Activated CD8-positive, alpha-beta T cell treated with anti-CD3 and anti-CD28 coated beads, Interleukin-2, amount 10 ng/mL, durations not matched to agents 7 days and 5 days (primary cell): ENCODE measurements at regions of chr6 and their contacts with region 1.

Region 1: GRCh38 chr6:26322645-26323482 is 42.1 kb upstream of the BTN3A2 start:
- DNase-seq: peak; percentile 84
- ATAC-seq: peak; percentile 72
- H3K4me3 Mint-ChIP-seq: peak overlapping the region; percentile 86
- H3K27ac Mint-ChIP-seq: peak overlapping the region; percentile 86
- H3K4me1 Mint-ChIP-seq: peaks cover 36% of the 10 kb centered on the region
- H3K27me3 Mint-ChIP-seq: peaks cover 16% of the 10 kb centered on the region

Region 2: GRCh38 chr6:25788305-25788922 is 534.5 kb before region 1 on chr6:
- CTCF ChIA-PET with region 1: no interaction called
- POLR2A ChIA-PET with region 1: no interaction called
- DNase-seq: peak; percentile 54
- ATAC-seq: peak; percentile 68
- H3K4me3 Mint-ChIP-seq: no peak overlapping the region
- H3K27ac Mint-ChIP-seq: no peak overlapping the region
- H3K4me1 Mint-ChIP-seq: no peaks in the 10 kb centered on the region
- H3K27me3 Mint-ChIP-seq: peaks cover 8% of the 10 kb centered on the region

Region 3: GRCh38 chr6:26156076-26156849 is 166.6 kb before region 1 on chr6:
- CTCF ChIA-PET with region 1: no interaction called
- POLR2A ChIA-PET with region 1: no interaction called
- DNase-seq: peak; percentile 91
- ATAC-seq: peak; percentile 55
- H3K4me3 Mint-ChIP-seq: peak overlapping the region; percentile 94
- H3K27ac Mint-ChIP-seq: peak overlapping the region; percentile 99
- H3K4me1 Mint-ChIP-seq: peaks cover 37% of the 10 kb centered on the region
- H3K27me3 Mint-ChIP-seq: peaks cover 8% of the 10 kb centered on the region

Region 4: DNA sequence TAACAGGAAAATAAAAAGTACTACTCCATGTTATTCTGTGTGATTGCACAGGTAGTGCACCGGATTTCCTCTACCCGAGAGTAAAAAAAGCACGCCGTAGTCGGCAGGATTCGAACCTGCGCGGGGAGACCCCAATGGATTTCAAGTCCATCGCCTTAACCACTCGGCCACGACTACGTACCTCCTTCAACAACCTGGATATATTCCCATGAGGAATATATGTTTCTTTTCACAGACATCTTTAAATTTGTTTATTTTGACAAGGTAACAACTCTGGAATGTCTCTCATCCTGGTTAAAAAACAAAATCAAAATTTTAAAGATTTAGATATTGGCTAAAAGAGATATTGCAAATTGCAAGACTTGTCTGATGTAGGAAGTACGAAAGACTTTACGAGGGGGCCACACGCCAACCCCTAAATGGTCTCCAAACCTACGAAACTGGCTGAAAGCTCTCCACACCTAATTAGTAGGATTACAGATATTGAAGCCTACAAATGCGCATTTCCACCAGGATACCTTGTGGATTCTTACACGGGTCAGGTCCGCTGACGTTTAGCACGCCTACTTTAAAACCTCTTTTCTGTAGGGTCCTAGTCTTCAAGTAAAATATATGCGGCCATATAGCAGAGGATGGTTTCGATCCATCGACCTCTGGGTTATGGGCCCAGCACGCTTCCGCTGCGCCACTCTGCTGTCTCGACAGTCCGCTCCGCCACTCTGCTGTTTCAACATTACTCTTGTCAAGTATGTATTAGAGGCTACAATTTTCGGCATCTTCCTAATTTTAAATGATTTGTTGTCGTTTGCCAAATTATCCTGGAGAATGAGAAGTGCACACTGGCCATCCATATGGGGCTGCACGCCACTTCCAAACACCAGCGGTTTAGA is 10.1 kb before region 1 on chr6:
- CTCF ChIA-PET with region 1: interaction called, 21 read pairs
- POLR2A ChIA-PET with region 1: interaction called, 4 read pairs
- DNase-seq: peak; percentile 89
- ATAC-seq: peak; percentile 87
- H3K4me3 Mint-ChIP-seq: peak overlapping the region; percentile 84
- H3K27ac Mint-ChIP-seq: peak overlapping the region; percentile 89
- H3K4me1 Mint-ChIP-seq: peaks cover 49% of the 10 kb centered on the region
- H3K27me3 Mint-ChIP-seq: no peaks in the 10 kb centered on the region

Region 5: GRCh38 chr6:26431258-26432172 is 108.7 kb after region 1 on chr6:
- CTCF ChIA-PET with region 1: no interaction called
- POLR2A ChIA-PET with region 1: no interaction called
- DNase-seq: no peak
- ATAC-seq: no peak
- H3K4me3 Mint-ChIP-seq: no peak overlapping the region
- H3K27ac Mint-ChIP-seq: no peak overlapping the region
- H3K4me1 Mint-ChIP-seq: peaks cover 3% of the 10 kb centered on the region
- H3K27me3 Mint-ChIP-seq: no peaks in the 10 kb centered on the region

Region 6: DNA sequence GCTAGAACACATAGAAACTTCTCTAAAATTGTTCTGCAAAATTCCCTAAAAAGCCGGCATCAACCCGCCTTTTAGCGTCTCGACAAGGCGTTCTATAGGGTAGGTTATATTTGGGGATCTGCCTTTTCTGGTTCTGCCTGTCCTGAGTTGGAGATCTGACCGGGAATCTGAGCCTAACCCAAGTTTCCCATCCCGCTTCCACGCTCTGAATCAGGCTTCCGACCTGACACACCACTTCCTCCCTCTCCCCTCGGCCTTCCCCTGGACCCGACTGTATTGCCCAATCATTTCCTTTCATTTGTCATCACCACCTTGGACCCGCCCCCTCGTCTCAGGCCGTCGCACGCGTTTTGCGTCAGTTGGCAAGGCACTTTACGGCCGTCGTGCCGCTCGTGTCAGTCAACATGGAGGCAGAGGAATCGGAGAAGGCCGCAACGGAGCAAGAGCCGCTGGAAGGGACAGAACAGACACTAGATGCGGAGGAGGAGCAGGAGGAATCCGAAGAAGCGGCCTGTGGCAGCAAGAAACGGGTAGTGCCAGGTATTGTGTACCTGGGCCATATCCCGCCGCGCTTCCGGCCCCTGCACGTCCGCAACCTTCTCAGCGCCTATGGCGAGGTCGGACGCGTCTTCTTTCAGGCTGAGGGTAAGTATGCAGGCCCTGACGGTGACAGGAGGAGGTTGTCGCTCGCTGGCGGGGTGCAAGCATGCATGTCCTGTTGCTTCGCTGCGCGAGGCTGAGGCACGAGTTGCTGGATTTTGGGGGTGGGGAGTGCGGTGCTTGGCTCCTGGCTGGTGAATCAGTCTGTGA is 273.9 kb after region 1 on chr6 and contains the start of gene ABT1:
- CTCF ChIA-PET with region 1: interaction called, 13 read pairs
- POLR2A ChIA-PET with region 1: no interaction called
- DNase-seq: peak; percentile 98
- ATAC-seq: peak; percentile 89
- H3K4me3 Mint-ChIP-seq: no peak within 1 kb of the TSS
- H3K27ac Mint-ChIP-seq: peak within 1 kb of the TSS; percentile 59
- H3K4me1 Mint-ChIP-seq: peaks cover 31% of the 10 kb centered on the region
- H3K27me3 Mint-ChIP-seq: peaks cover 18% of the 10 kb centered on the region
- total RNA-seq, gene ABT1: 25.0 to 25.3 TPM